ENCODE measurements at regions of chr17 and their contacts with region 1.

Region 1: GRCh38 chr17:61352781-61353491 is 46.7 kb upstream of the TBX2 start:
- DNase-seq: no peak
- H3K4me3 ChIP-seq: no peak overlapping the region
- CTCF ChIP-seq: no peak
- POLR2A ChIP-seq: no peak

Region 2: GRCh38 chr17:61303817-61304096 is 49.2 kb before region 1 on chr17:
- intact Hi-C with region 1: loop called (anchors 1 kb)
- DNase-seq: no peak
- H3K4me3 ChIP-seq: no peak overlapping the region
- CTCF ChIP-seq: no peak
- POLR2A ChIP-seq: no peak

Measured in lower leg skin (tissue), 4 donors.